Thyroid gland (tissue), 4 donors: ENCODE measurements at regions of chr19 and their contacts with region 1.

Region 1: GRCh38 chr19:15264061-15264932 is 32.0 kb upstream of the EPHX3 start:
- DNase-seq: peak; percentile 53 to 64
- H3K4me3 ChIP-seq: no peak overlapping the region
- H3K27ac ChIP-seq: peak overlapping the region in 2 of 3 donors; percentile 53 to 67
- H3K4me1 ChIP-seq: peaks cover 41 to 64% of the 10 kb centered on the region in 2 donors
- H3K27me3 ChIP-seq: no peaks in the 10 kb centered on the region
- CTCF ChIP-seq: peak; percentile 21 to 59 (median 48)
- POLR2A ChIP-seq: no peak

Region 2: GRCh38 chr19:15072930-15073647 is 191.2 kb before region 1 on chr19:
- intact Hi-C with region 1: no loop called
- DNase-seq: no peak
- H3K4me3 ChIP-seq: no peak overlapping the region
- H3K27ac ChIP-seq: no peak overlapping the region
- H3K4me1 ChIP-seq: no peaks in the 10 kb centered on the region
- H3K27me3 ChIP-seq: no peaks in the 10 kb centered on the region
- CTCF ChIP-seq: no peak
- POLR2A ChIP-seq: no peak

Region 3: GRCh38 chr19:15125232-15126067 is 138.8 kb before region 1 on chr19:
- intact Hi-C with region 1: no loop called
- DNase-seq: peak; percentile 99
- H3K4me3 ChIP-seq: peak overlapping the region; percentile 35 to 77 (median 58)
- H3K27ac ChIP-seq: peak overlapping the region; percentile 84 to 95 (median 87)
- H3K4me1 ChIP-seq: peaks cover 17 to 18% of the 10 kb centered on the region in 2 donors
- H3K27me3 ChIP-seq: no peaks in the 10 kb centered on the region
- CTCF ChIP-seq: peak in 2 of 6 experiments; percentile 6 to 38
- POLR2A ChIP-seq: peak in 1 of 2 donors; percentile 61

Region 4: GRCh38 chr19:15177269-15178116 is 86.8 kb before region 1 on chr19:
- intact Hi-C with region 1: loop called (anchors 5 kb)
- DNase-seq: peak; percentile 80 to 81
- H3K4me3 ChIP-seq: peak overlapping the region in 1 of 3 donors; percentile 6
- H3K27ac ChIP-seq: no peak overlapping the region
- H3K4me1 ChIP-seq: peaks cover 3 to 6% of the 10 kb centered on the region in 2 donors
- H3K27me3 ChIP-seq: no peaks in the 10 kb centered on the region
- CTCF ChIP-seq: peak; percentile 68 to 99 (median 99)
- POLR2A ChIP-seq: no peak

Region 5: GRCh38 chr19:15332311-15332996 is 68.2 kb after region 1 on chr19 and contains the start of gene BRD4:
- intact Hi-C with region 1: loop called (anchors 5 kb)
- DNase-seq: peak; percentile 70 to 73
- H3K4me3 ChIP-seq: peak within 1 kb of the TSS; percentile 90 to 95 (median 93)
- H3K27ac ChIP-seq: peak within 1 kb of the TSS; percentile 47 to 89 (median 89)
- H3K4me1 ChIP-seq: peaks cover 37 to 41% of the 10 kb centered on the region in 2 donors
- H3K27me3 ChIP-seq: no peaks in the 10 kb centered on the region
- CTCF ChIP-seq: no peak
- POLR2A ChIP-seq: peak; percentile 65 to 77
- total RNA-seq, gene BRD4: 20.8 to 78.1 (median 32.4) TPM

Region 6: DNA sequence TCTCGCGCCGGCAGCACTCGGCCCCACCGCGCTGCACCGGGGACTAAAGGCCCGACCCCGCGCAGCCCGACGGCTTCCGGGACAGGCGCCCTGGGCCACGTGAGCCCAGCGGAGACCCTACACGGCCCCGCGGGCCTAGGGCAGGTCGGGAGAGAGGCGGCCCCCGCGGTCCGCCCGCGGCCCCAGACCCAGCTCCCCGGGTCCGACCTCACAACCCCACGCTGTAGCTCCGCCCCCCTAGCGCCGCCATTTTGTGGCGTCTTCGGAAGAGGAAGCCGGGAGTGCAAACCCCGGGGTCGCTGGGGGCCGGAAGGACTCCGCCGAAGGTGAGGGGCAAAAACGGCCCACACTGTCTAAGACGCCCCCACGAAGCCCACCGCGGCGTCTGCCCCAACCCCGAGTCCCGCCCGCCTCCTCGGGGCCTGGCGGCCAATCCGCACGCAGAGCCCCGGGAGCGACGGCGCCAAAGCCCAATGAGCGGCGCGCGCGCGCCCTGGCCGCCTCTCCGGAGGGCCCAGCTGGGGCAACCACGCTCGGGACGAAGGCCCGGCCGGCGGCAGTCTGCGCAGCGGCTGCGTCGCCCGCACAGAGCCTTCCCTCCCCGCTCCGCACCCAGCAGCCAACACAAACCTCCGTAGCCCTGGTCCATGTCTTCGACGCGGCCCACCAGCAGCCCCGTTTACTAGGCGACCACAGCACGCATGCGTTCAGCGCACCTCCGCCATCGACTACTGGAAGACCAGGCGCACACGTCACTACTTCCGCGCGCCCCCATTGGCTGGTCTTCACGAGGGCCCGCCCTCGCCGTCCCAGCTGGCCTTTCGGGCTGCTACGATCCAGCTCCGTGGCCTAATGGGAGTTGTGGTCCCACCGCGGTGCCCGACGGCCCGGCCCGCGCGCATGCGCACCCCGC is 115.0 kb after region 1 on chr19 and contains the start of gene AKAP8:
- intact Hi-C with region 1: loop called (anchors 5 kb)
- DNase-seq: peak; percentile 99
- H3K4me3 ChIP-seq: peak within 1 kb of the TSS; percentile 54 to 88 (median 70)
- H3K27ac ChIP-seq: peak within 1 kb of the TSS; percentile 89 to 98 (median 97)
- H3K4me1 ChIP-seq: peaks cover 21 to 46% of the 10 kb centered on the region in 2 donors
- H3K27me3 ChIP-seq: no peaks in the 10 kb centered on the region
- CTCF ChIP-seq: no peak
- POLR2A ChIP-seq: peak; percentile 38 to 82
- total RNA-seq, gene AKAP8: 21.8 to 33.2 (median 26.6) TPM

Region 7: DNA sequence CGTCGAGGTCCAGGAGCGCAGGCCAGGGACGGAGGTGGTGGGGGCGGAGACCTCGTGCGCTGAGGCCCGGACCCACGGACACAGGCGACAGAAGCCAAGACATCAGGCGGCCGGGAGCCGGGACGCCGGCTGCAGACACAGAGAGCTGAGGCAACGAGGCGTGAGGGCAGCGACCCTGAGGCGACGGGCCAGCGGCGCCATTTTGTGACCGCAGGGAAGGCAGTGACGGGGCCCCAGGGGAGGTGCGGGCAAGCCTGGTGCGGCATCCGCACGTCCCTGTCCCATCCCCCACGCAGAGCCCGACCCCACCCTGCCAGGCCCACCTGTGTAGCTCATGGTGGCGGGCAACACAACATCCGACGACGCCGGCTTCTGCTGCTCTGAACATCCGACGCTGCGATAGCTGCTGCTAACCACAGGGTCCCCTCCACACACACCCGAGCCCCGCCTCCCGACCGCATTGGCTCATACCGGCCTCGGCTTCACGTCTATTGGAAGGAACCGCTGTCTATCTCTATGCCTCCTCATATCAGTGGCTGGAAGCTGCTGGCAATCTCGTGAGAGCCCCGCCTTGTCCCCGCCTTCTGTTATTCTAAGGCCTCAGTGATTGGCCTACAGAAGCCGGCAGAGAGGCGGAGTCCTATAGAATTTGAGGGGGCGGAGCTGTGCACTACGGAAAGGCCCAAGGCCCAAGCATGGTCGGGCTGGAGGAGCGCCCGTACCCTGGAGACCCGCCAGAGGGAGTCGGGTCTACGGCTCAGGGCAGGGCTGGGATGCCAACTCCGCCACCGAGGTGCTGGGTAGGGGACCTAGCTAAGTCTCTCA is 154.5 kb after region 1 on chr19 and contains the start of gene AKAP8L:
- intact Hi-C with region 1: loop called (anchors 10 kb)
- DNase-seq: peak; percentile 99 to 100
- H3K4me3 ChIP-seq: peak within 1 kb of the TSS; percentile 33 to 99 (median 56)
- H3K27ac ChIP-seq: peak within 1 kb of the TSS; percentile 82 to 92 (median 90)
- H3K4me1 ChIP-seq: peaks cover 31 to 40% of the 10 kb centered on the region in 2 donors
- H3K27me3 ChIP-seq: no peaks in the 10 kb centered on the region
- CTCF ChIP-seq: peak in 4 of 6 experiments; percentile 47 to 66 (median 54)
- POLR2A ChIP-seq: peak; percentile 54 to 93
- total RNA-seq, gene AKAP8L: 122 to 272 (median 204) TPM